H1 (cell line): ENCODE measurements at regions of chr3 and their contacts with region 1.

Region 1: GRCh38 chr3:4561661-4562060 is 68.5 kb downstream of the ITPR1 start:
- DNase-seq: no peak
- H3K4me3 ChIP-seq: no peak overlapping the region
- H3K27ac ChIP-seq: no peak overlapping the region
- H3K4me1 ChIP-seq: no peaks in the 10 kb centered on the region
- H3K27me3 ChIP-seq: no peaks in the 10 kb centered on the region
- CTCF ChIP-seq: no peak
- EP300 ChIP-seq: no peak
- POLR2A ChIP-seq: no peak
- RAD21 ChIP-seq: no peak

Region 2: DNA sequence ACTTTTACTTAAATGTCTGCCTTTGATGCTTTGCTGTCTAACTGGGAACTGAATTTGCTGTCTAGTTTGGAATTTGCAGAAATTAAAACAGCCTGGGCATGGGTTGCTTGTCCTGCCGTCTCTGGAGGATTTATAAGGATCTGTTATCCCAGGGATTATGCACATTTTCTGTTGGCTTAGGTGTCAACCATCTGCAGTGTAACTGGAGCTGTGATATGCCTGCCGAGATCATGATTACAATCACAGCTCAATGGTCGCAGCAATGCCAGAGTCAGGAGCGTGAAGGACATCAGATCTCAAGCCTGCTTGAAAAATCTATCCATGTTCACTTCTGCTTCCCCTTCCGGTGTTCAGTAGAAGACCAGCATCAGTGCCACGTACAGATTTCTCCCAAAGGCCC is 300.3 kb before region 1 on chr3:
- CTCF ChIA-PET with region 1: no interaction called
- POLR2A ChIA-PET with region 1: no interaction called
- DNase-seq: no peak
- H3K4me3 ChIP-seq: no peak overlapping the region
- H3K27ac ChIP-seq: no peak overlapping the region
- H3K4me1 ChIP-seq: no peaks in the 10 kb centered on the region
- H3K27me3 ChIP-seq: no peaks in the 10 kb centered on the region
- CTCF ChIP-seq: no peak
- EP300 ChIP-seq: no peak
- POLR2A ChIP-seq: no peak
- RAD21 ChIP-seq: no peak

Region 3: GRCh38 chr3:4551051-4551711 is 10.5 kb before region 1 on chr3:
- CTCF ChIA-PET with region 1: interaction called, 11 read pairs
- POLR2A ChIA-PET with region 1: no interaction called
- DNase-seq: no peak
- H3K4me3 ChIP-seq: no peak overlapping the region
- H3K27ac ChIP-seq: no peak overlapping the region
- H3K4me1 ChIP-seq: no peaks in the 10 kb centered on the region
- H3K27me3 ChIP-seq: no peaks in the 10 kb centered on the region
- CTCF ChIP-seq: no peak
- EP300 ChIP-seq: no peak
- POLR2A ChIP-seq: no peak
- RAD21 ChIP-seq: no peak

Region 4: DNA sequence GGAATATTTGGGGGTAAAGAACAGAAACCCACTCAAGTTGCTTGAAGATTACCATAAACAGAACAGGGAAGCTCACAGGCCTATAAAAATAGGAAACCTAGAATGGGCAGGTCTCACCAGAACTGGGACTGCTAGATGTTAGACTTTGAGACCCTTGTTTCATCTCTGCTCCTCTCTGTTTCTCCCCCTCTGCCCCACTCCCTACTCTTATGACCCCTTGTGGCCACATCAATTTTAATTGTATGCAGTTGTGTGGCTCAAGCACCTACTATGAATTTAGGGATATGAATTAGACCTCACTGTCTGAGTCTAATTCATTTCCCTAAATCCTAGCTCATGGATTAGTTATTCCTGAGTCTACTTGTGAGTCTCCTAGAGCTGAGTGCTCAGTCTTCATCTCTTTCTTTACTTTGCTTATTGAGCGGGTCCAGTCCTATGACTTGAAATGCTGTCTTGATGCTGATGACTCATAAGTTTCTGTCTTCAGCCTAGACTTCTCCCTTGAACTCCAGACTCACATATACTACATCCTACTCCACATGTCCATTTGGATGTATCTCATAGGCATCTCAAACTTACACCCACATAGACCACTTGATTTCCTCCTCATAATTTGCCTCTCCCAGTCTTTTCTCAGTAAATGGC is 10.2 kb after region 1 on chr3:
- CTCF ChIA-PET with region 1: interaction called, 12 read pairs
- POLR2A ChIA-PET with region 1: no interaction called
- DNase-seq: no peak
- H3K4me3 ChIP-seq: no peak overlapping the region
- H3K27ac ChIP-seq: no peak overlapping the region
- H3K4me1 ChIP-seq: peaks cover 0 to 2% (median 0%) of the 10 kb centered on the region in 4 experiments; a peak in 1 of 7 replicates
- H3K27me3 ChIP-seq: no peaks in the 10 kb centered on the region
- CTCF ChIP-seq: peak in 2 of 3 experiments; percentile 44 to 52; a peak in 3 of 4 replicates
- EP300 ChIP-seq: no peak
- POLR2A ChIP-seq: no peak
- RAD21 ChIP-seq: peak; percentile 51 to 64

Region 5: DNA sequence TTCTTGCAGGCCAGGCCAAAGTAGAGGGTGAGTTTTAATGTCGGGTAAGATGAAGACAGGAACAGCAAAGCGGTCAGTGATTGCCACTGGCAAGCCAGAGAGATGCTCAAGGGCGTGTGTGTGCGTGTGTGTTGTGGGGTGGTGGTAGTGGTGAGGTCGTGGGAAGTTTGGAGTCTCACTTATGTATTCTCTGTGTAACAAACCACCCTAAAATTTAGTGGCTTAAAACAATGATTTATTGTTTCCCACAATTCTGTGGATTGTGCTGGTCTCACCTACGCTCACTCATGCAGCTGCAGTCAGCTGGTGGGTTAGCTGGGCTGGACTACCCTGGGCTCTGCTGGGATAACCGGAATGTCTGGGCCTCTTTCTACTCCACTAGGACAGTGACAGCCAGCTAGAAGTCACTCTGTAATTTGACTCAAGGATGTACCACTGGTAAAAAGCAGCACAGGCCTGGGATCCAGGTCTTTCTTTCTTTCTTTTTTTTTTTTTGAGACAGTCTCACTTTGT is 366.7 kb after region 1 on chr3:
- CTCF ChIA-PET with region 1: no interaction called
- POLR2A ChIA-PET with region 1: no interaction called
- DNase-seq: no peak
- H3K4me3 ChIP-seq: no peak overlapping the region
- H3K27ac ChIP-seq: no peak overlapping the region
- H3K4me1 ChIP-seq: no peaks in the 10 kb centered on the region
- H3K27me3 ChIP-seq: no peaks in the 10 kb centered on the region
- CTCF ChIP-seq: no peak
- EP300 ChIP-seq: no peak
- POLR2A ChIP-seq: no peak
- RAD21 ChIP-seq: no peak